Naive thymus-derived CD4-positive, alpha-beta T cell (primary cell): ENCODE measurements at regions of chr12 and their contacts with region 1.

Region 1: DNA sequence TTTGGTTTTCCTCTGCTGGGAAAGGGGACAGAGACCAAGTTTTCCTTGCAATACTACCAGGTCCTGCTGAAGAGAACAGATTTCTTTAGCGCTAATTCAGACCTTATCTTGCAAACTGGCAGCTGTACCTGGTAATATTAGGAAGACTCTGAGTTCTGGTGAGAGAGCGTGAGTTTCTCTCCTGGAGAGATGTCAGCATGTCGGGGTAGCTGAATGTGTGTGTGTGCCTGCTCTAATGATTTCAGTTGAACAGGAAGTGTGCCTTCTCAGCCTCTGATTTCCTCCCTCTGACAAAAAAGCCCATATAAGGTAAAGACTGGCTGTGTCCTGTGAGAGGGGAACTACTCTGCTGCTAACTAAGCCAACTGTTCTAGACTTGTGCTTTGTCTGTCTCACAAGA is 10.3 kb upstream of the ERP27 start:
- DNase-seq: peak in 8 of 9 donors; percentile 34 to 87 (median 81)
- ATAC-seq: peak; percentile 88
- H3K4me3 ChIP-seq: peak overlapping the region; percentile 47
- H3K4me3 Mint-ChIP-seq: peak overlapping the region; percentile 72 to 97 (median 90)
- H3K27ac ChIP-seq: peak overlapping the region; percentile 96
- H3K27ac Mint-ChIP-seq: peak overlapping the region; percentile 87 to 99 (median 97)
- H3K4me1 ChIP-seq: peaks cover 77 to 79% of the 10 kb centered on the region in 2 donors
- H3K4me1 Mint-ChIP-seq: peaks cover 69 to 95% (median 91%) of the 10 kb centered on the region in 7 donors
- H3K27me3 ChIP-seq: no peaks in the 10 kb centered on the region
- H3K27me3 Mint-ChIP-seq: no peaks in the 10 kb centered on the region

Region 2: GRCh38 chr12:14403711-14404196 is 544.9 kb before region 1 on chr12:
- CTCF ChIA-PET with region 1: no interaction called
- POLR2A ChIA-PET with region 1: no interaction called
- intact Hi-C with region 1: loop called in 1 of 2 experiments (anchors 5 kb)
- DNase-seq: peak in 6 of 9 donors; percentile 32 to 69 (median 49)
- ATAC-seq: peak; percentile 81
- H3K4me3 ChIP-seq: peak overlapping the region; percentile 19
- H3K4me3 Mint-ChIP-seq: peak overlapping the region; percentile 7 to 68 (median 64)
- H3K27ac ChIP-seq: peak overlapping the region; percentile 39
- H3K27ac Mint-ChIP-seq: peak overlapping the region; percentile 60 to 92 (median 83)
- H3K4me1 ChIP-seq: peaks cover 55 to 60% of the 10 kb centered on the region in 2 donors
- H3K4me1 Mint-ChIP-seq: peaks cover 51 to 89% (median 77%) of the 10 kb centered on the region in 7 donors
- H3K27me3 ChIP-seq: no peaks in the 10 kb centered on the region
- H3K27me3 Mint-ChIP-seq: no peaks in the 10 kb centered on the region

Region 3: GRCh38 chr12:14803011-14803829 is 145.5 kb before region 1 on chr12 and contains the starts of genes C12orf60 and WBP11:
- CTCF ChIA-PET with region 1: no interaction called
- POLR2A ChIA-PET with region 1: interaction called, 4 read pairs
- intact Hi-C with region 1: loop called (anchors 1 to 2 kb)
- DNase-seq: peak; percentile 56 to 95 (median 91)
- ATAC-seq: peak; percentile 98
- H3K4me3 ChIP-seq: peak within 1 kb of the TSS; percentile 80
- H3K4me3 Mint-ChIP-seq: no peak within 1 kb of the TSS
- H3K27ac ChIP-seq: peak within 1 kb of the TSS; percentile 97
- H3K27ac Mint-ChIP-seq: no peak within 1 kb of the TSS
- H3K4me1 ChIP-seq: peaks cover 14 to 19% of the 10 kb centered on the region in 2 donors
- H3K4me1 Mint-ChIP-seq: peaks cover 0 to 26% (median 10%) of the 10 kb centered on the region in 7 donors
- H3K27me3 ChIP-seq: no peaks in the 10 kb centered on the region
- H3K27me3 Mint-ChIP-seq: no peaks in the 10 kb centered on the region
- total RNA-seq, gene C12orf60: 0.22 to 1.7 (median 1.2) TPM in 4 of 5 experiments, not detected in the other
- total RNA-seq, gene WBP11: 77.9 to 129 (median 90.4) TPM

Region 4: DNA sequence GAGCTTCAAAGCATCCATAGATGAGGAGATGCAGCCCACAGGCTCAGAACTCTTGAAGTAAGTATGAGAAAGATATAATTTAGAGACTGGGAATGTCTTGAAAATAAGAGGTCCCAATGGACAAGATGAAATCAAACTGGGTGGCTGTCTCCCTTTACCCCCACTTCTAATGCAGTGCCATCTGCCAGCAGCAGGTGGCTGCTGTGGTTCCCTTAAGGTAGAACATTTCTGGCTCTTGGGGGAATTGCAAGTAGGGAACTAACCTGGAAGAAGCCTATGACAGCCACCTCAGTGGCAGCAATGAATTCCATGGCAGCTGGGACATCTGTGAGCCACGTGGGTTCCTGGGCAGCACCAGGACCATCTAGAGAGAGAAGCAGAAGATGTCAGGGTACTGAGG is 11.0 kb before region 1 on chr12:
- CTCF ChIA-PET with region 1: interaction called, 28 read pairs
- POLR2A ChIA-PET with region 1: interaction called, 11 read pairs
- intact Hi-C with region 1: loop called in 1 of 2 experiments (anchors 1 kb)
- DNase-seq: no peak
- ATAC-seq: peak; percentile 57
- H3K4me3 ChIP-seq: no peak overlapping the region
- H3K4me3 Mint-ChIP-seq: peak overlapping the region in 5 of 10 donors; percentile 3 to 59 (median 25)
- H3K27ac ChIP-seq: peak overlapping the region; percentile 36
- H3K27ac Mint-ChIP-seq: peak overlapping the region; percentile 56 to 94 (median 84)
- H3K4me1 ChIP-seq: peaks cover 0 to 22% of the 10 kb centered on the region in 2 donors
- H3K4me1 Mint-ChIP-seq: peaks cover 34 to 81% (median 69%) of the 10 kb centered on the region in 7 donors
- H3K27me3 ChIP-seq: no peaks in the 10 kb centered on the region
- H3K27me3 Mint-ChIP-seq: no peaks in the 10 kb centered on the region

Region 5: GRCh38 chr12:15193946-15194345 is 245.3 kb after region 1 on chr12:
- CTCF ChIA-PET with region 1: no interaction called
- POLR2A ChIA-PET with region 1: no interaction called
- intact Hi-C with region 1: no loop called
- DNase-seq: no peak
- ATAC-seq: no peak
- H3K4me3 ChIP-seq: no peak overlapping the region
- H3K4me3 Mint-ChIP-seq: no peak overlapping the region
- H3K27ac ChIP-seq: no peak overlapping the region
- H3K27ac Mint-ChIP-seq: no peak overlapping the region
- H3K4me1 ChIP-seq: no peaks in the 10 kb centered on the region
- H3K4me1 Mint-ChIP-seq: no peaks in the 10 kb centered on the region
- H3K27me3 ChIP-seq: no peaks in the 10 kb centered on the region
- H3K27me3 Mint-ChIP-seq: peaks cover 4 to 32% (median 18%) of the 10 kb centered on the region in 5 donors

Region 6: DNA sequence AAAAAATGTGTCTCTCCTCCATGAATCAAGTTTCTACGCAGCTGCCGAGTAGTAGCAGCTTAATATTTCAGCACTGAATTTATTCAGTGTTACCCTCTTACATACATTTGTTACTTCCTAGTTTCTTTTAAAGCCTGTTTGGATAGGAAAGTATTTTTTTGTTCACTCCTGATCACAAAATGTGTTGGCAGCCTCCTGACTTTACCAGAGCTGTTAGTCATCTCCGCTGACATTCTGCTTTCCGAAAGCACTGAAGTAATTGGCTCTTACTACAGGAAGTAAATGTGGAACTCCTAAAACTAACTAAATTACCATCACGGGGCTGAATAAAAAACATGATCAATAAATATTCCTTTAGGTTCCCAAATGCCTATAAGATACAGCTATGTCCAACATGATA is 615.0 kb after region 1 on chr12:
- CTCF ChIA-PET with region 1: no interaction called
- POLR2A ChIA-PET with region 1: no interaction called
- intact Hi-C with region 1: loop called in 1 of 2 experiments (anchors 5 kb)
- DNase-seq: peak in 6 of 9 donors; percentile 39 to 54 (median 50)
- ATAC-seq: peak; percentile 84
- H3K4me3 ChIP-seq: peak overlapping the region; percentile 38
- H3K4me3 Mint-ChIP-seq: peak overlapping the region; percentile 54 to 87 (median 82)
- H3K27ac ChIP-seq: peak overlapping the region; percentile 82
- H3K27ac Mint-ChIP-seq: peak overlapping the region; percentile 87 to 96 (median 94)
- H3K4me1 ChIP-seq: peaks cover 0 to 37% of the 10 kb centered on the region in 2 donors
- H3K4me1 Mint-ChIP-seq: peaks cover 36 to 89% (median 77%) of the 10 kb centered on the region in 7 donors
- H3K27me3 ChIP-seq: no peaks in the 10 kb centered on the region
- H3K27me3 Mint-ChIP-seq: peaks cover 0 to 5% (median 0%) of the 10 kb centered on the region in 5 donors